ENCODE measurements at regions of chr9 and their contacts with region 1.

Region 1: GRCh38 chr9:6703898-6704639 is 53.7 kb upstream of the KDM4C start:
- DNase-seq: peak; percentile 79
- H3K4me3 Mint-ChIP-seq: peak overlapping the region; percentile 85
- H3K27ac Mint-ChIP-seq: peak overlapping the region; percentile 86
- H3K4me1 Mint-ChIP-seq: peaks cover 15% of the 10 kb centered on the region
- H3K27me3 Mint-ChIP-seq: no peaks in the 10 kb centered on the region

Region 2: GRCh38 chr9:6681147-6681956 is 22.7 kb before region 1 on chr9:
- CTCF ChIA-PET with region 1: interaction called, 13 read pairs
- POLR2A ChIA-PET with region 1: interaction called, 44 read pairs
- DNase-seq: peak; percentile 95
- H3K4me3 Mint-ChIP-seq: peak overlapping the region; percentile 94
- H3K27ac Mint-ChIP-seq: peak overlapping the region; percentile 99
- H3K4me1 Mint-ChIP-seq: peaks cover 22% of the 10 kb centered on the region
- H3K27me3 Mint-ChIP-seq: no peaks in the 10 kb centered on the region

Region 3: GRCh38 chr9:6715755-6716643 is 11.9 kb after region 1 on chr9:
- CTCF ChIA-PET with region 1: interaction called, 4 read pairs
- POLR2A ChIA-PET with region 1: interaction called, 39 read pairs
- DNase-seq: peak; percentile 81
- H3K4me3 Mint-ChIP-seq: peak overlapping the region; percentile 85
- H3K27ac Mint-ChIP-seq: peak overlapping the region; percentile 79
- H3K4me1 Mint-ChIP-seq: peaks cover 13% of the 10 kb centered on the region
- H3K27me3 Mint-ChIP-seq: peaks cover 3% of the 10 kb centered on the region